ENCODE measurements at regions of chr10 and their contacts with region 1.

Region 1: DNA sequence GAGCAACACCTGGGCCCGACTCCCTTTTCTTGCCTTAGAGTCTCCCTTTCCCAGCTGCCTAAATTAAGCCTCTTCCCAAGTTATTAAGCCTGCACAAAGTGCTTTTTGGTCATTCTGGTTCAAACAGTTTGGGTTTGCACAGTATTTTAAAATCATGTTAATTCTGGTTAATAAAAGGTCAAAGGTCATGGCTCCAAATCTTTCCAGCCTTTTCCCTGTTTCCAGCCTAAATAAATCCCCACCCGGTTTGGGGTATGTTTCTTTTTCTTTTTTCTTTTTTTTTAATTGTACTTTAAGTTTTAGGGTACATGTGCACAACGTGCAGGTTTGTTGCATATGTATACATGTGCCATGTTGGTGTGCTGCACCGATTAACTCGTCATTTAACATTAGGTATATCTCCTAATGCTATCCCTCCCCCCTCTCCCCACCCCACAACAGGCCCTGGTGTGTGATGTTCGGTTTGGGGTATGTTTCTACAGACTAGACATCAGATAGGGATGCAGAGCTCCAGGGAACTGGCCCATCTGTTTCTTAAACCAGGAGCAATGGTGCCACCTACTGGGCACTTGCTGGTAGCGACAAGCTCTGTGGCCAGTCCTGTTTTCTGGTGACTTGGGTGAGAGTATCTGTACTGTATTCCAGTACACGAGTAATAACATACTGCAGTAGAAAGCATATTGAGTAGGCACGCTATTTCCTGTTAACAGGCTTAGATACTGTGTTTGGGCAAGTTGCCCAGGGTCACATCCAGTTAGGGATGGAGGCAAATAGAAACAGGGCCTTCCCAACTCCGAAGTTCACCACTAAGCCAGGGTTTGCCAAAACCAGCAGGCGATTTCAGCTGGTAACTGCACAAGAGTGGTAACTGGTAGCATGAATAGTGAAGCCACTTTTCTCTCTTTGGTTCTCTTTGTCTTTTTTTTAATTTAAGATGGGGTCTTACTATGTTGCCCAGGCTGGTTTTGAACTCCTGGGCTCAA is 60.6 kb upstream of the TRIM8 start:
- DNase-seq: peak; percentile 87 to 95
- ATAC-seq: peak; percentile 98 to 99
- H3K4me3 ChIP-seq: no peak overlapping the region
- H3K27ac ChIP-seq: no peak overlapping the region
- H3K4me1 ChIP-seq: no peaks in the 10 kb centered on the region
- CTCF ChIP-seq: peak; percentile 85
- EP300 ChIP-seq: no peak
- POLR2A ChIP-seq: no peak
- RAD21 ChIP-seq: peak; percentile 85 to 90

Region 2: DNA sequence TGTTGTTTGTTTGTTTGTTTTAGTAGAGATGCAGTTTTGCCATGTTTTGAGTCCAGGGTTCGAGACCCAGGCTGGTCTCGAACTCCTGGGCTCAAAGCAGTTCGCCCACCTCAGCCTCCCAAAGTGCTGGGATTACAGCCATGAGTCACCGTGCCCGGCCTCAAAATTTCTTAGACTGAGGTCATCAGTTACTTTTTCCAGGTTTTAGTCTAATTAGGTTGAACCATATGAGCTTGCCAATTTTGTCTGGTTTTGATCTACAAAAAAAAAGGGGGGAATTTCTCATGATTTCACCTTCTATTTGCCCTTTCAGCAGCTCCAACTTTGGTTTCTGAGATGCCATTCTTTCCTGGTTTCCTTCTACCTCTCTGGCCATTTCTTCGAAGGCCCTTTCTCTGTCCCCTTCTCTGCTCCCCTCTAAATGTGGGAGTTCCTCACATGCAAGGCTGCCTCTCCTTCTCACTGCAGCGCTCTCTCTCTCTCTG is 156.9 kb before region 1 on chr10:
- CTCF ChIA-PET with region 1: interaction called, 10 read pairs
- POLR2A ChIA-PET with region 1: interaction called, 3 read pairs
- DNase-seq: no peak
- ATAC-seq: no peak
- H3K4me3 ChIP-seq: no peak overlapping the region
- H3K27ac ChIP-seq: no peak overlapping the region
- H3K4me1 ChIP-seq: peaks cover 19% of the 10 kb centered on the region
- CTCF ChIP-seq: no peak
- EP300 ChIP-seq: no peak
- POLR2A ChIP-seq: no peak
- RAD21 ChIP-seq: no peak

Region 3: GRCh38 chr10:102492983-102493382 is 90.7 kb before region 1 on chr10:
- CTCF ChIA-PET with region 1: interaction called, 15 read pairs
- POLR2A ChIA-PET with region 1: no interaction called
- DNase-seq: no peak
- ATAC-seq: peak in 1 of 2 experiments; percentile 31; a peak in 1 of 6 replicates
- H3K4me3 ChIP-seq: no peak overlapping the region
- H3K27ac ChIP-seq: no peak overlapping the region
- H3K4me1 ChIP-seq: peaks cover 10% of the 10 kb centered on the region; the same call in 2 of the 3 replicates
- CTCF ChIP-seq: no peak
- EP300 ChIP-seq: no peak
- POLR2A ChIP-seq: no peak
- RAD21 ChIP-seq: no peak

Region 4: GRCh38 chr10:102511583-102512274 is 72.0 kb before region 1 on chr10:
- CTCF ChIA-PET with region 1: interaction called, 51 read pairs
- POLR2A ChIA-PET with region 1: no interaction called
- DNase-seq: no peak
- ATAC-seq: no peak
- H3K4me3 ChIP-seq: no peak overlapping the region
- H3K27ac ChIP-seq: no peak overlapping the region
- H3K4me1 ChIP-seq: 0 out of 3 replicates have a peak, but pooled peaks cover 3% of the 10 kb centered on the region
- CTCF ChIP-seq: no peak
- EP300 ChIP-seq: no peak
- POLR2A ChIP-seq: no peak
- RAD21 ChIP-seq: no peak

Region 5: GRCh38 chr10:102554531-102554930 is 29.2 kb before region 1 on chr10:
- CTCF ChIA-PET with region 1: interaction called, 12 read pairs
- POLR2A ChIA-PET with region 1: no interaction called
- DNase-seq: no peak
- ATAC-seq: no peak
- H3K4me3 ChIP-seq: no peak overlapping the region
- H3K27ac ChIP-seq: no peak overlapping the region
- H3K4me1 ChIP-seq: no peaks in the 10 kb centered on the region
- CTCF ChIP-seq: no peak
- EP300 ChIP-seq: no peak
- POLR2A ChIP-seq: no peak
- RAD21 ChIP-seq: no peak

Region 6: GRCh38 chr10:102596506-102596971 is 12.8 kb after region 1 on chr10:
- CTCF ChIA-PET with region 1: interaction called, 60 read pairs
- POLR2A ChIA-PET with region 1: interaction called, 3 read pairs
- DNase-seq: peak; percentile 66 to 75
- ATAC-seq: peak; percentile 89 to 96
- H3K4me3 ChIP-seq: no peak overlapping the region
- H3K27ac ChIP-seq: peak overlapping the region in 1 of 2 experiments; percentile 38; a peak in 2 of 6 replicates
- H3K4me1 ChIP-seq: 0 out of 3 replicates have a peak, but pooled peaks cover 3% of the 10 kb centered on the region
- CTCF ChIP-seq: peak; percentile 68
- EP300 ChIP-seq: no peak
- POLR2A ChIP-seq: no peak
- RAD21 ChIP-seq: peak; percentile 62 to 74; a peak in 4 of 5 replicates